Naive thymus-derived CD4-positive, alpha-beta T cell (primary cell): ENCODE measurements at regions of chr5 and their contacts with region 1.

Region 1: DNA sequence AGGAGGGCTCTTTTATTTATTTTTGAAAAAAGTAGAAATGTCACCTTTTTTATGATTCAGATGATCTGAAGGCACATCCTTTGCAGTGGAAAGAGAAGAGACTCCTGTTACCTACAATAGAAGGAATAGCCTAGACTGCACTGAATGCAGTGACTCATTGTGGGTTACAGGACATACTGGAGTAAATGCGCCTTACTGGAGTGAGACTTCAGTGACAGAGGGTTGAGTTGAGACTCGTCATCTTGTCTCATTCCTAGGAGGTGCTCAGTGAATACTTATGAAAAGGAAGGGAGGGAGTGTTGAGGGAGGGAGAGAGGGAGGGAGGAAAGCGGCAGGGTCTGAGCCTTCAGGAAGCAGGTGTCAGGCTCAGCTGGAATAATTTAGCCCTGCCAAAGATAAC is 25.2 kb downstream of the ANKRA2 start:
- DNase-seq: no peak
- ATAC-seq: no peak
- H3K4me3 ChIP-seq: no peak overlapping the region
- H3K4me3 Mint-ChIP-seq: no peak overlapping the region
- H3K27ac ChIP-seq: no peak overlapping the region
- H3K27ac Mint-ChIP-seq: no peak overlapping the region
- H3K4me1 ChIP-seq: no peaks in the 10 kb centered on the region
- H3K4me1 Mint-ChIP-seq: peaks cover 0 to 15% (median 0%) of the 10 kb centered on the region in 7 donors
- H3K27me3 ChIP-seq: no peaks in the 10 kb centered on the region
- H3K27me3 Mint-ChIP-seq: peaks cover 3 to 33% (median 25%) of the 10 kb centered on the region in 5 donors

Region 2: GRCh38 chr5:72920690-72921502 is 619.3 kb before region 1 on chr5:
- CTCF ChIA-PET with region 1: no interaction called
- POLR2A ChIA-PET with region 1: no interaction called
- intact Hi-C with region 1: loop called in 1 of 2 experiments (anchors 1 kb)
- DNase-seq: peak in 1 of 9 donors; percentile 1
- ATAC-seq: peak; percentile 50
- H3K4me3 ChIP-seq: no peak overlapping the region
- H3K4me3 Mint-ChIP-seq: no peak overlapping the region
- H3K27ac ChIP-seq: no peak overlapping the region
- H3K27ac Mint-ChIP-seq: no peak overlapping the region
- H3K4me1 ChIP-seq: no peaks in the 10 kb centered on the region
- H3K4me1 Mint-ChIP-seq: peaks cover 0 to 1% (median 0%) of the 10 kb centered on the region in 7 donors
- H3K27me3 ChIP-seq: no peaks in the 10 kb centered on the region
- H3K27me3 Mint-ChIP-seq: no peaks in the 10 kb centered on the region

Region 3: GRCh38 chr5:73215891-73216610 is 324.1 kb before region 1 on chr5:
- CTCF ChIA-PET with region 1: no interaction called
- POLR2A ChIA-PET with region 1: no interaction called
- intact Hi-C with region 1: loop called in 1 of 2 experiments (anchors 2 kb)
- DNase-seq: peak; percentile 28 to 64 (median 54)
- ATAC-seq: peak; percentile 93
- H3K4me3 ChIP-seq: peak overlapping the region; percentile 20
- H3K4me3 Mint-ChIP-seq: peak overlapping the region in 8 of 10 donors; percentile 21 to 73 (median 63)
- H3K27ac ChIP-seq: no peak overlapping the region
- H3K27ac Mint-ChIP-seq: no peak overlapping the region
- H3K4me1 ChIP-seq: no peaks in the 10 kb centered on the region
- H3K4me1 Mint-ChIP-seq: peaks cover 0 to 14% (median 6%) of the 10 kb centered on the region in 7 donors
- H3K27me3 ChIP-seq: peaks cover 11 to 15% of the 10 kb centered on the region in 2 donors
- H3K27me3 Mint-ChIP-seq: peaks cover 70 to 86% (median 81%) of the 10 kb centered on the region in 5 donors

Region 4: DNA sequence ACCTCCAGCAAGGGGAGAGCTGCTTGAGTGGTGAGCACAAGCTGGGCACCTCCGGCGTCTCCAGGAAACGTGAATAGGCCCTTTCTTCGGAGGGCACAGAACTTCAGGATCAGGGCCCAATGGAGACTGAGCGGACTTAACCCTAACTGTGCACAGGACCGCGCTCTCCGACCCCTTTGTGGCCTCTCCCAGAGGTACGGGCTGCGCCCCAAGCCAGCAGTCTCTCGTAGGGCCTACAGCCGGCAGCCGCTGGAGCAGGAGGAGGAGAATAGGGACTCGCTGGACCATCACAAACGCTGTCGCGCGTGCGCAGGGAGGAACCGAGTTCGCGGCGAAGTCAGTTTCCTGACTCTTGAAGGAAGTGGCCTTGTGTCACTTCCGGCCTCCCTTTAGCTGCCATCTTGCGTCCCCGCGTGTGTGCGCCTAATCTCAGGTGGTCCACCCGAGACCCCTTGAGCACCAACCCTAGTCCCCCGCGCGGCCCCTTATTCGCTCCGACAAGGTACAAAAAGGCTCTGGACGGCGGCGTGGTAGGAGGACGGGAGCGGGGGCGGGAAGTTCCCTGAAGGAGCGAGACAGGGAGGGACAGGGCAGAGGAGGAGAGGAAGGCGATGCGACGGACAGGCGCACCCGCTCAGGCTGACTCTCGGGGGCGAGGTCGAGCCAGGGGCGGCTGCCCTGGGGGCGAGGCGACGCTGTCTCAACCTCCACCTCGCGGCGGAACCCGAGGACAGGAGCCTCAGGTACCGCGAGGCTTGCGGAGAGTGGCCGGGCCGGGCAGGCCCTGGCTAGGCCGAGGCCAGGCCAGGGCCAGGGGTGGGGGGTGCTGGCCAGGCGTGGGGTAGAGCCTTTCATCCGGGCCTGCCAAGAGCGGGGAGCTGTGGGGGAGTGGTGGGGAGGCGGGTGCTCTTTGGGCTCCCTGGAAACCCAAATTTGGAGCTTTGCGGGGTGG is 41.9 kb before region 1 on chr5 and contains the start of gene BTF3:
- CTCF ChIA-PET with region 1: interaction called, 3 read pairs
- POLR2A ChIA-PET with region 1: no interaction called
- intact Hi-C with region 1: loop called in 1 of 2 experiments (anchors 2 kb)
- DNase-seq: peak; percentile 83 to 94 (median 91)
- ATAC-seq: peak; percentile 96
- H3K4me3 ChIP-seq: peak within 1 kb of the TSS; percentile 81
- H3K4me3 Mint-ChIP-seq: peak within 1 kb of the TSS; percentile 92 to 99 (median 97)
- H3K27ac ChIP-seq: peak within 1 kb of the TSS; percentile 93
- H3K27ac Mint-ChIP-seq: peak within 1 kb of the TSS; percentile 97 to 100 (median 99)
- H3K4me1 ChIP-seq: peaks cover 22 to 31% of the 10 kb centered on the region in 2 donors
- H3K4me1 Mint-ChIP-seq: peaks cover 26 to 57% (median 41%) of the 10 kb centered on the region in 7 donors
- H3K27me3 ChIP-seq: peaks cover 0 to 4% of the 10 kb centered on the region in 2 donors
- H3K27me3 Mint-ChIP-seq: peaks cover 4 to 15% (median 13%) of the 10 kb centered on the region in 5 donors
- total RNA-seq, gene BTF3: 557 to 758 (median 700) TPM

Region 5: DNA sequence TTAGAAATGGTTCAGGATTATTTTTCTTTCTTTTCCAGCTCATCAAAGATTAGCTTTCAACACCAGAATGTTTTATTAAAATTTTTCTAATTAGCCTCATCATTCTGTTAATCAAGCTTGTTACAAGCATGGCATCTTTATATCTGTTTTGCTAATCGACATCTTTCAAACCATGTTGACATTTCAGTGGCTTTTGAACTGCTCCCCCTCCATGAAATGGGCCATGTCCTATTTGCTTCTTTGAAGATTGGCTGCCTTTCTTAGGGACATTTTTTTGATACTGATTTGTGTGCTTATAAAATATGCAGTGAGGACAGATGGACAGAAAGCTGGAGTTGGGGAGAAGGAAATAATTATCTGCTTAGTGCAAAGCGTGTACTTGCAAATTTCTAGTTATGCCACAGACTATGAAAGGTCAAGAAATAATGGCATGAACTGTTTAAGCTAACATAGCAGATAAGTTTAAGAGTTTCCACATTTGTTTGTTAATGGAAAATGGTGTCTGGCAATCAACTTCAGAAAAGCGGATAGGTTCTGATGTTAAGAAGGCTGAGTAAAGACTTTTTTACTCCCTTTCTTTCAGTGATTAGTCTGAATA is 14.5 kb before region 1 on chr5:
- CTCF ChIA-PET with region 1: interaction called, 38 read pairs
- POLR2A ChIA-PET with region 1: no interaction called
- intact Hi-C with region 1: no loop called
- DNase-seq: no peak
- ATAC-seq: no peak
- H3K4me3 ChIP-seq: no peak overlapping the region
- H3K4me3 Mint-ChIP-seq: no peak overlapping the region
- H3K27ac ChIP-seq: no peak overlapping the region
- H3K27ac Mint-ChIP-seq: no peak overlapping the region
- H3K4me1 ChIP-seq: no peaks in the 10 kb centered on the region
- H3K4me1 Mint-ChIP-seq: no peaks in the 10 kb centered on the region
- H3K27me3 ChIP-seq: no peaks in the 10 kb centered on the region
- H3K27me3 Mint-ChIP-seq: peaks cover 0 to 28% (median 10%) of the 10 kb centered on the region in 5 donors